Activated CD8-positive, alpha-beta T cell treated with anti-CD3 and anti-CD28 coated beads, Interleukin-2, amount 10 ng/mL, durations not matched to agents 7 days and 5 days (primary cell): ENCODE measurements at regions of chr15 and their contacts with region 1.

Region 1: DNA sequence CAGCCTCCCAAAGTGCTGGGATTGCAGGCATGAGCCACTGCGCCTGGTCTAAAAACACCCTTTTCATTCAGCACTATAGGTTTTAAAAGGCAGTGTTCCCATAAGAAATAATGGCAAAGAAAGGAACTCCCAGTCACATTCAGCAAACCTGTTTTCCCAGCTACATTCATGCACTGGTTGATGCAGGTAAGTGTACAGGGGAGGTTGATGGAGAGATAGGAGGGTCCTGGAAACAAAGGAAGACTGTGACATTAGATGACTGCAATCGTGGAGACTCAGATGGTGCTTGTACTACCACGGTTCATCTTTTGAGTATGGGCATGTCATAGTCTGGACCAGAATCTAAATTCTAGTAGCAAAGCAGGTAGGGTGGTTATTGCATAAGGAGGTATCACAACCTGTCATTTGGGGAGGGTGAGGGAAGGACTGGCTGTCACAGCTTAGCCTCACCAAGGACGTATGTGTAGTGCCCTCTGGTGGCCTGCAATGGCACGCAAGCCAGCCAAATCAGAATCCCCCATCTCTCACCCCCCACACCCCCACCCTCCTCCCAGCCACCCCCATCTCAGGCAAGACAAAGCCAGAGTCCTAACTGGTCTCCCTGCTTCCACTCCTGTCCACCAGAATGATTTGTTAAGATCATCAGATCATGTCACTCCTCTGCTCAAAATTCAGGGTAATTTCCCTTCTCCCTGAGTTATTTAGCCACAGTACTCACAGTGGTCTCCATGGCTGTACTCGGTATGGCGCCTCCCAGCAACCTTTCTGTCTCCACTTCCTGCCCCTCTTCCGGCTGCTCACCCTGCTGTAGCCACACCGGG is 28.8 kb upstream of the UBL7 start:
- DNase-seq: peak; percentile 92
- ATAC-seq: peak; percentile 96
- H3K4me3 Mint-ChIP-seq: peak overlapping the region; percentile 73
- H3K27ac Mint-ChIP-seq: peak overlapping the region; percentile 91
- H3K4me1 Mint-ChIP-seq: peaks cover 34% of the 10 kb centered on the region
- H3K27me3 Mint-ChIP-seq: no peaks in the 10 kb centered on the region

Region 2: DNA sequence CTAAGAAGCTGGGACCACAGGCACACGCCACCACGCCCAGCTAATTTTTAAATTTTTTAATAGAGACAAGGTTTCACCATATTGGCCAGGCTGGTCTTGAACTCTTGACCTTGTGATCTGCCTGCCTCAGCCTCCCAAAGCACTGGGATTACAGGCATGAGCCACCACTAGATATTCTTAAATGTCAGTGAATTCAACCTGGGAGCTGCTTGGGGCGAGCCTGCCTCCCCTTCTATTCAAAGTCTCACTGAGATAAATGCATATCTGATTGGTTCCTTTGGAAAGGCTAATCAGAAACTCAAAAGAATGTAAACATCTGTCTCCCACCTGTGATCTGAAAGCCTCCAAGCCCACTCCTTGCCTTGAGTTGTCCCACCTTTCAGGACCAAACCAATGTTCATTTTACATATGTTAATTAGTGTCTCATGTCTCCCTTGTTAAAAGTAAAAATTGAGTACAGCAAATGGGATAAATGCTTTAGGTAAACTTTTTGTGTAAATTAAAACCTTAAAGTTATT is 137.3 kb before region 1 on chr15:
- CTCF ChIA-PET with region 1: no interaction called
- POLR2A ChIA-PET with region 1: no interaction called
- DNase-seq: no peak
- ATAC-seq: no peak
- H3K4me3 Mint-ChIP-seq: no peak overlapping the region
- H3K27ac Mint-ChIP-seq: no peak overlapping the region
- H3K4me1 Mint-ChIP-seq: no peaks in the 10 kb centered on the region
- H3K27me3 Mint-ChIP-seq: peaks cover 25% of the 10 kb centered on the region

Region 3: GRCh38 chr15:74373731-74374647 is 115.7 kb before region 1 on chr15:
- CTCF ChIA-PET with region 1: interaction called, 18 read pairs
- POLR2A ChIA-PET with region 1: no interaction called
- DNase-seq: peak; percentile 97
- ATAC-seq: peak; percentile 97
- H3K4me3 Mint-ChIP-seq: peak overlapping the region; percentile 77
- H3K27ac Mint-ChIP-seq: peak overlapping the region; percentile 75
- H3K4me1 Mint-ChIP-seq: peaks cover 25% of the 10 kb centered on the region
- H3K27me3 Mint-ChIP-seq: peaks cover 18% of the 10 kb centered on the region